Posterior vena cava (tissue), 2 donors: ENCODE measurements at regions of chr3 and their contacts with region 1.

Region 1: DNA sequence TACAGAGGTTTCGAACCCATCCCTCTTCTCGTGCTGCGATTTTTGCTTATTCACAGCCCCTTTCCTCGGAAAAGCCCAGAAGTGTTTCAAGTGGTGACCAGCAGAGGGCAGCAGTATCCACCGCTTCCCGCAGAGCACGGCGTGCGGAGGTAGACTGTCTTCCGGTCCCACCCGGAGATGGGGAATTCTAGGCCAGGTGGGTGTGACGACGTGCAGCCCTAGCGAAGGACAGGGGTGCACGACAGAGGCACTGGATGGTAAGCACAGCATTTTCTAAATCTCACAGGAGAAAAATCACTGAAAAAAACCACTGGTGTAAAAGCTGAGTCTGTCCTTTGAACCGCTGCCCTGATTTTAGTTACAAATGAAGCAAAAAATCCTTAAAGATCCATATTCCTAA is 7.4 kb upstream of the PSMD6 start:
- DNase-seq: peak; percentile 87

Region 2: DNA sequence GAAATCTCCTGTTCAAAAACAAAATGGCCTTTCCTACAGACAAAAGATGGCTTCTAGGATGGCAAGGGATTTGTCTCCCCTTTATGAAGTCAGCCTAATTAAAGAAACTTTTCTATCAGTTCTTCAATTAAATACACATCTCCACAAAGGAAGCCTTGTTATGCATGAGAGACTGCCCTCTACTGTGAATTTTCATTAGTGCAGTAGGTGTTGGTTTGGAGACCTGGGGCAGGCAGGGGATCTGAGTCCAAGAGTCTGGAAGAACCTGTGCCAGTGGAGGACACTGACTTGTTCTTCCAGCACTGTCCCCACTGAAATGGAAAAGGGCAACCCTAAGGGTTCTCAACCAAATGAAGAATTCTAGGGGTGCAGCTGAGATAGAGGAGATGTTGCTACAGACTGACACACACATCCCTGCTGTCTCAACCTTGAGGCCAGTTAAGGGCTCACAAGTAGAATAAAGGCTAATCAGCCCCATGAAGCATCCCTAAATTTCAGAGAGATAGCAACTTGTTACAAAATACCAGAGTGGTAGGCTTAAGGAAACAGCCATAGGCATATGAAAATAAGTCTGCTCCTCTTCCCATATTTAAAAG is 368.6 kb after region 1 on chr3:
- intact Hi-C with region 1: loop called (anchors 2 to 5 kb)
- DNase-seq: no peak

Region 3: GRCh38 chr3:64484289-64484992 is 453.7 kb after region 1 on chr3:
- intact Hi-C with region 1: loop called (anchors 5 to 10 kb)
- DNase-seq: peak; percentile 92